ENCODE measurements at regions of chr16 and their contacts with region 1.

Region 1: GRCh38 chr16:67672739-67673662 is 6.4 kb downstream of the C16orf86 start:
- DNase-seq: peak; percentile 78
- H3K4me3 ChIP-seq: no peak overlapping the region
- H3K27ac ChIP-seq: peak overlapping the region; percentile 79
- H3K4me1 ChIP-seq: peaks cover 19% of the 10 kb centered on the region
- H3K27me3 ChIP-seq: no peaks in the 10 kb centered on the region
- CTCF ChIP-seq: peak; percentile 84

Region 2: GRCh38 chr16:67356396-67356795 is 316.6 kb before region 1 on chr16:
- CTCF ChIA-PET with region 1: interaction called, 14 read pairs
- POLR2A ChIA-PET with region 1: no interaction called
- intact Hi-C with region 1: no loop called
- DNase-seq: no peak
- H3K4me3 ChIP-seq: no peak overlapping the region
- H3K27ac ChIP-seq: no peak overlapping the region
- H3K4me1 ChIP-seq: no peaks in the 10 kb centered on the region
- H3K27me3 ChIP-seq: no peaks in the 10 kb centered on the region
- CTCF ChIP-seq: no peak

Region 3: GRCh38 chr16:67806428-67807147 is 133.6 kb after region 1 on chr16 and contains the starts of genes RANBP10 and TSNAXIP1:
- CTCF ChIA-PET with region 1: no interaction called
- POLR2A ChIA-PET with region 1: no interaction called
- intact Hi-C with region 1: loop called (anchors 5 kb)
- DNase-seq: peak; percentile 100
- H3K4me3 ChIP-seq: peak within 1 kb of the TSS; percentile 78
- H3K27ac ChIP-seq: peak within 1 kb of the TSS; percentile 83
- H3K4me1 ChIP-seq: peaks cover 14% of the 10 kb centered on the region
- H3K27me3 ChIP-seq: no peaks in the 10 kb centered on the region
- CTCF ChIP-seq: no peak
- total RNA-seq, gene RANBP10: 27.1 and 28.0 TPM in 2 replicates
- total RNA-seq, gene TSNAXIP1: 1.0 and 1.6 TPM in 2 replicates

Region 4: DNA sequence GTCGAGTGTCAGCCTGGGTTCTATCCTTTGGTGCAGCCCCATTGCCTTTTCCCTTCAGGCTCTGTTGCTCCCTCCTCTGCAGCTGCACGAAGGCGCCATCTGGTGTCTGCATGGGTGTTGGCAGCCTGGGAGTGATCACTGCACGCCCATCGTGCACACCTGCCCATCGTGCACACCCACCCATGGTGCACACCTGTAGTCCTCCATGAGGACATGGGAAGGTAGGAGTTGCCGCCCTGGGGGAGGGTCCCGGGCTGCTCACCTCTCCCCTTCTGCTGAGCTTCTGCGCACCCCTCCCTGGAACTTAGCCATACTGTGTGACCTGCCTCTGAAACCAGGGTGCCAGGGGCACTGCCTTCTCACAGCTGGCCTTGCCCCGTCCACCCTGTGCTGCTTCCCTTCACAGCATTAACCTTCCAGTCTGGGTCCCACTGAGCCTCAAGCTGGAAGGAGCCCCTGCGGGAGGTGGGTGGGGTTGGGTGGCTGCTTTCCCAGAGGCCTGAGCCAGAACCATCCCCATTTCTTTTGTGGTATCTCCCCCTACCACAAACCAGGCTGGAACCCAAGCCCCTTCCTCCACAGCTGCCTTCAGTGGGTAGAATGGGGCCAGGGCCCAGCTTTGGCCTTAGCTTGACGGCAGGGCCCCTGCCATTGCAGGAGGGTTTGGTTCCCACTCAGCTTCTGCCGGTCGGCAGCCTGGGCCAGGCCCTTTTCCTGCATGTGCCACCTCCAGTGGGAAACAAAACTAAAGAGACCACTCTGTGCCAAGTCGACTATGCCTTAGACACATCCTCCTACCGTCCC is 255.8 kb after region 1 on chr16:
- CTCF ChIA-PET with region 1: no interaction called
- POLR2A ChIA-PET with region 1: no interaction called
- intact Hi-C with region 1: loop called (anchors 1 kb)
- DNase-seq: peak; percentile 81
- H3K4me3 ChIP-seq: no peak overlapping the region
- H3K27ac ChIP-seq: no peak overlapping the region
- H3K4me1 ChIP-seq: peaks cover 22% of the 10 kb centered on the region
- H3K27me3 ChIP-seq: no peaks in the 10 kb centered on the region
- CTCF ChIP-seq: peak; percentile 94

Region 5: GRCh38 chr16:69318177-69318910 is 1645.3 kb after region 1 on chr16:
- CTCF ChIA-PET with region 1: interaction called, 11 read pairs
- POLR2A ChIA-PET with region 1: no interaction called
- intact Hi-C with region 1: no loop called
- DNase-seq: no peak
- H3K4me3 ChIP-seq: no peak overlapping the region
- H3K27ac ChIP-seq: no peak overlapping the region
- H3K4me1 ChIP-seq: no peaks in the 10 kb centered on the region
- H3K27me3 ChIP-seq: no peaks in the 10 kb centered on the region
- CTCF ChIP-seq: no peak